Dorsolateral prefrontal cortex (tissue), 120 donors: ENCODE measurements at regions of chrX and their contacts with region 1.

Region 1: DNA sequence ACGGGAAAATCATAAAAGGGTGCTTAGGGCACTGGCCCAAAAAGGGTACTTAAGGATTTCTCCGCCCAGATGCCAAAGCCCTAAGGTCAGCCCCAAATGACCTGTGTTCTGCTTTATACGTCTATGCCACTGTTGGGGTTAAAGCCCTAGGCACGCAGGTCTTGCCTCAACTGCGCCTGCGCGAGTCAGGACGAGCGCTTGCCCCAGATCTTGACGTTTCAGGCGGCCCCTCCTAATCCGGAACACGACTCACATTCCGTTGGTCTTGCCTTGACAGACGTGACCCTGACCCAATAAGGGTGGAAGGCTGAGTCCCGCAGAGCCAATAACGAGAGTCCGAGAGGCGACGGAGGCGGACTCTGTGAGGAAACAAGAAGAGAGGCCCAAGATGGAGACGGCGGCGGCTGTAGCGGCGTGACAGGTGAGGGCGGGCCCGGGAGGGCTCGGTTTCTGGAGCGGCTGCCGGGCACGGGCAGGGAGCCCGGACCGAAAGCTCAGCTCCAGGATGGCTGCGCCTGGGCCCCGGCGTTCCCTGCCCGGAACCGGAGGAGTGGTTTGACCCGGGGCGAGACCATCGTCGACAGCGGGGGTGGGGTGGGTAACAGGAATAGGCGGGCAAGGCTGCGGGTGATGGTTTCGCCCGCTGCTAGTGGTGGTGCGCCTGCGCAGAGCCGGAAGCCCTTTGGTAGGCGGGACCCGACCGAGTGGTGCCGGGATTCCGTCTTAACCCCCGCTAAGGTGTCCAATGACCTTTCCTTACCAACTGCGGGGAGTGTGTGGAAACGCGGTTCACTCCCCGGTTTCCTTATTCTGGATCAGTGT is at the start of gene ARAF:
- DNase-seq: peak; percentile 84 to 98 (median 96)
- H3K4me3 ChIP-seq: peak within 1 kb of the TSS; percentile 41 to 81 (median 67)
- H3K27ac ChIP-seq: peak within 1 kb of the TSS; percentile 89 to 99 (median 97)
- H3K27me3 ChIP-seq: peaks cover 0 to 28% (median 2%) of the 10 kb centered on the region in 45 donors
- CTCF ChIP-seq: peak in 1 of 56 donors; percentile 9
- total RNA-seq, gene ARAF: 19.3 to 46.5 (median 30.2) TPM

Region 2: GRCh38 chrX:47380268-47380667 is 180.8 kb before region 1 on chrX:
- intact Hi-C with region 1: no loop called
- DNase-seq: no peak
- H3K4me3 ChIP-seq: no peak overlapping the region
- H3K27ac ChIP-seq: no peak overlapping the region
- H3K27me3 ChIP-seq: peaks cover 0 to 63% (median 12%) of the 10 kb centered on the region in 45 donors
- CTCF ChIP-seq: no peak

Region 3: GRCh38 chrX:47619486-47620302 is 58.7 kb after region 1 on chrX and contains the start of gene SYN1:
- intact Hi-C with region 1: loop called in 1 of 2 experiments (anchors 5 kb)
- DNase-seq: peak; percentile 57 to 84 (median 77)
- H3K4me3 ChIP-seq: peak within 1 kb of the TSS; percentile 11 to 70 (median 54)
- H3K27ac ChIP-seq: peak within 1 kb of the TSS in 44 of 59 donors; percentile 10 to 83 (median 64)
- H3K27me3 ChIP-seq: peaks cover 0 to 50% (median 3%) of the 10 kb centered on the region in 45 donors
- CTCF ChIP-seq: peak in 46 of 56 donors; percentile 7 to 56 (median 32)
- total RNA-seq, gene SYN1: 127 to 711 (median 406) TPM

Region 4: DNA sequence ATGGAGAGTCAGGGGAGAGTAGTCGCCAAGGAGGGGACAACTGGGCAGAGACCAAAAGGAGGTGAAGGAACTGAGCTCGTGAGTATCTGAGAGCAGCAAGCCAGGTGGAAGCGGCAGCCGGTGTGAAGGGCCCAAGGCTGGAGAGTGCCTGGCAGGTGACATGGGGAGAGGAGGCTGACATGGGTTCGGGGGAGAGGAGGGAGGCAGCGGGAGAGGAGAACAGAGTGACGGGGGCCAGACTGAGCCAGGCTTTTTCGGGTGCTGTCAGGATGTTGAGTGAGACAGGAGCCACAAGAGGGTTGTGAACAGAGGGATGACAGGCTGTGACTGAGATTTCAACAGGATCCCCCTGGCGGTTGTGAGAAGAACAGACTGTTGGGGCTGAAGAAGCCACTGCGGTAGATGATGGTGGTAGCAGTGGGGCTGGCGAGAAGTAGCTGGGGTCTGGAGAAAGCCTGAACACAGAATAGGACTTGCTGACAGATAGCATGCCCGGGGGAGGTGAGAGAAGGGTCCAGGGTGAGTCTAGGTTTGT is 83.6 kb after region 1 on chrX:
- intact Hi-C with region 1: loop called in 1 of 2 experiments (anchors 5 kb)
- DNase-seq: peak in 2 of 10 donors; percentile 30 to 51
- H3K4me3 ChIP-seq: no peak overlapping the region
- H3K27ac ChIP-seq: peak overlapping the region in 13 of 59 donors; percentile 4 to 66 (median 39)
- H3K27me3 ChIP-seq: peaks cover 0 to 57% (median 8%) of the 10 kb centered on the region in 45 donors
- CTCF ChIP-seq: peak in 52 of 56 donors; percentile 17 to 58 (median 39)

Region 5: GRCh38 chrX:47658684-47659515 is 97.9 kb after region 1 on chrX and contains the start of gene UXT:
- intact Hi-C with region 1: loop called in 1 of 2 experiments (anchors 5 kb)
- DNase-seq: peak; percentile 79 to 92 (median 89)
- H3K4me3 ChIP-seq: peak within 1 kb of the TSS; percentile 36 to 82 (median 67)
- H3K27ac ChIP-seq: peak within 1 kb of the TSS; percentile 38 to 97 (median 93)
- H3K27me3 ChIP-seq: peaks cover 0 to 28% (median 3%) of the 10 kb centered on the region in 45 donors
- CTCF ChIP-seq: no peak
- total RNA-seq, gene UXT: 25.2 to 57.7 (median 42.1) TPM